Right cardiac atrium (tissue), 5 donors: ENCODE measurements at regions of chr5 and their contacts with region 1.

Region 1: DNA sequence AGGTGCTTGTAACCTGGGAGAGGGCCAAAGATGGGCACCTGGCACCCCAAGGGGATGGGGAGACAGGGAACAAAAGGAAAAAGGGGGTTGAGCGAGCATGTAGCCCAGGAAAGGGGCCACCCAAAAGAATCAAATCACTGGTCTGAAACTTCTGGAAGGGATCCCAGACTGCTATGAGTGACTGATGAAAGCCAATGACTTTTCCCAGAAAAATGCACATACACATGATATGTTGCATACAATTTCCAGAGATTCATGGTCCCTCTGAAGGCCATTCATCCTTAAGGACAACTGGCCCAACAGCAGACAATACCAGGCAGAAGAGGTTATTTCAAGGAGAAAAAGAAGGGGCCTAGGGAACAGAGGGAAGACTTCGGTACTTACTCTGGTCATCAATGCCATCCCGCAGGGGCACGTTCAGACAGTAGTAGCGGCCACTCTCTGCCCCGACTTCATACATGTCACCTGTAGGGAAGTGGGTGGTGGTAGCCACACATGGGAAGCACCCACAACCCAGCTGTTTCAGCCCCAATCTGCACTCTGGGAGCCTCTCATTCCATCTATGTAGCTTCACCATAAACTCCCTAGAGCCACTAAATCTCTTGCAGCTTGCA is 8.4 kb downstream of the HDAC3 start:
- DNase-seq: no peak
- ATAC-seq: no peak
- H3K4me3 ChIP-seq: no peak overlapping the region
- H3K27ac ChIP-seq: no peak overlapping the region
- H3K4me1 ChIP-seq: no peaks in the 10 kb centered on the region
- H3K27me3 ChIP-seq: no peaks in the 10 kb centered on the region

Region 2: DNA sequence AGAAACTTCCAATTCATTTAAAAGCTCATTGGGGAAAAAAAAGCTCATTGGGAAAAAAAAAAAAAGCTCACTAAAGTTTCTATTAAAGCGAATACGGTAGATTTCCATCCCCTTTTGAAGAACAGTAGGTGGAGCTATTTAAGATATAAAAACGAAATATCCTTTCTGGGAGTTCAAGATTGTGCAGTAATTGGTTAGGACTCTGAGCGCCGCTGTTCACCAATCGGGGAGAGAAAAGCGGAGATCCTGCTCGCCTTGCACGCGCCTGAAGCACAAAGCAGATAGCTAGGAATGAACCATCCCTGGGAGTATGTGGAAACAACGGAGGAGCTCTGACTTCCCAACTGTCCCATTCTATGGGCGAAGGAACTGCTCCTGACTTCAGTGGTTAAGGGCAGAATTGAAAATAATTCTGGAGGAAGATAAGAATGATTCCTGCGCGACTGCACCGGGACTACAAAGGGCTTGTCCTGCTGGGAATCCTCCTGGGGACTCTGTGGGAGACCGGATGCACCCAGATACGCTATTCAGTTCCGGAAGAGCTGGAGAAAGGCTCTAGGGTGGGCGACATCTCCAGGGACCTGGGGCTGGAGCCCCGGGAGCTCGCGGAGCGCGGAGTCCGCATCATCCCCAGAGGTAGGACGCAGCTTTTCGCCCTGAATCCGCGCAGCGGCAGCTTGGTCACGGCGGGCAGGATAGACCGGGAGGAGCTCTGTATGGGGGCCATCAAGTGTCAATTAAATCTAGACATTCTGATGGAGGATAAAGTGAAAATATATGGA is 197.8 kb before region 1 on chr5 and contains the start of gene PCDHGA12:
- intact Hi-C with region 1: no loop called
- DNase-seq: peak; percentile 66 to 81 (median 75)
- ATAC-seq: peak; percentile 86 to 89
- H3K4me3 ChIP-seq: peak within 1 kb of the TSS; percentile 1
- H3K27ac ChIP-seq: no peak within 1 kb of the TSS
- H3K4me1 ChIP-seq: no peaks in the 10 kb centered on the region
- H3K27me3 ChIP-seq: no peaks in the 10 kb centered on the region
- total RNA-seq, gene PCDHGA12: 4.8 to 7.1 (median 5.6) TPM

Region 3: DNA sequence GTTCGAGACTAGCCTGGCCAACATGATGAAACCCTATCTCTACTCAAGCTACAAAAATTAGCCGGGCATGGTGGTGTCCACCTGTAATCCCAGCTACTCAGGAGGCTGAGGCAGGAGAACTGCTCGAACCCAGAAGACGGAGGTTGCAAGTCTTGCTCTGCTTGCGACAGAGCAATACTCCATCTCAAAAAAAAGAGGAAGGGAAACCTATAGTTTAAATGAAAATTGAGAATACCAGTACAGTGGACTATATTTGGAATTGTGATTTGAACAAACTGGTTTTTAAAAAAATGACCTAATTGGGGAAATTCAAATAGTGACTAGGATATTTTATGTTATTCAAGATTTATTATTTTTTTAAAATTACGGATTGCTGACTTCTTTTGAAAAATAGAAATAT is 42.7 kb before region 1 on chr5:
- intact Hi-C with region 1: loop called in 1 of 4 experiments (anchors 5 kb)
- DNase-seq: no peak
- ATAC-seq: no peak
- H3K4me3 ChIP-seq: no peak overlapping the region
- H3K27ac ChIP-seq: no peak overlapping the region
- H3K4me1 ChIP-seq: no peaks in the 10 kb centered on the region
- H3K27me3 ChIP-seq: no peaks in the 10 kb centered on the region

Region 4: GRCh38 chr5:141778206-141778605 is 149.9 kb after region 1 on chr5:
- intact Hi-C with region 1: no loop called
- DNase-seq: no peak
- ATAC-seq: peak in 1 of 2 donors; percentile 28
- H3K4me3 ChIP-seq: no peak overlapping the region
- H3K27ac ChIP-seq: no peak overlapping the region
- H3K4me1 ChIP-seq: no peaks in the 10 kb centered on the region
- H3K27me3 ChIP-seq: no peaks in the 10 kb centered on the region

Region 5: DNA sequence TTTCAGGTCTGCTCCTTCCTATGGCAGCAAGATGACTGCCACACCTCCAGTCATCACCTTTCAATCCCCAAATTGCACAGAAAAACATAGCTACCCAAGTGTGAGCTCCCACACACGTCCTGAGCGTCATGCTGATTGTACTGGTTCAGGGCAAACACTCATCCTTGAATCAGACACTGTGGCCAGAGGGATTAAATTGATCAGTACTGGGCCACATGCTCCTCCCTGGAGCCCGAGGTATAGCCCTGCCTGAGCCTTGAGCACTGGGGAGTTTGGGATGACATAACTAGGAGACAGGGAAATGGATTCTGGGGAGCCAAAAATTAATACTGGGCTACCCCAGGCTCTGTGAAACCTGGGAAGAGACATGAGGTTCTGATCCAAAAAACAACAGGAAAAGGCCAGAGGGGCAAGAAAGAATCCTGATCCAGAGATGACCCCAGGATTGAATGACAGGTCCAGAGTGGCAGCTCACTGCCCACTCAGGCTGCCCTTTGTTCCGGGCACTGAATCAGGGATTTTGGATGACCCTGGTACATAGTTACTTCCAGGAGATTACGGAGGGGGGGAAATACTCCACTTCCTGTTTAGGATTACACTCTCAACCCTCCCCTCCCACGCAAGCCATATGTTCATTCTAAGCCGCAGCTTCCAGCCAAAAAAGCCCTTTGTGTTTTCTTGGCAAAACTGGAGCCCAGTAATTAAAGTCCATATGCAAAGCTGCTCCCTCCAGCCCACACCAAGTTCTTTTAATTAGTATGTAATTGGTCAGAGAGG is 838.1 kb after region 1 on chr5:
- intact Hi-C with region 1: no loop called
- DNase-seq: no peak
- ATAC-seq: no peak
- H3K4me3 ChIP-seq: no peak overlapping the region
- H3K27ac ChIP-seq: no peak overlapping the region
- H3K4me1 ChIP-seq: peaks cover 4% of the 10 kb centered on the region
- H3K27me3 ChIP-seq: no peaks in the 10 kb centered on the region